Uterus (tissue), 4 donors: ENCODE measurements at regions of chr7 and their contacts with region 1.

Region 1: GRCh38 chr7:86708031-86708680 is 64.4 kb downstream of the GRM3 start:
- DNase-seq: no peak
- H3K4me3 ChIP-seq: no peak overlapping the region
- H3K27ac ChIP-seq: no peak overlapping the region
- H3K4me1 ChIP-seq: no peaks in the 10 kb centered on the region
- H3K27me3 ChIP-seq: no peaks in the 10 kb centered on the region
- CTCF ChIP-seq: no peak
- POLR2A ChIP-seq: no peak

Region 2: GRCh38 chr7:86785641-86786040 is 77.5 kb after region 1 on chr7:
- intact Hi-C with region 1: loop called (anchors 10 kb)
- DNase-seq: no peak
- H3K4me3 ChIP-seq: no peak overlapping the region
- H3K27ac ChIP-seq: no peak overlapping the region
- H3K4me1 ChIP-seq: no peaks in the 10 kb centered on the region
- H3K27me3 ChIP-seq: no peaks in the 10 kb centered on the region
- CTCF ChIP-seq: no peak
- POLR2A ChIP-seq: no peak

Region 3: GRCh38 chr7:86814661-86815379 is 106.7 kb after region 1 on chr7:
- intact Hi-C with region 1: no loop called
- DNase-seq: no peak
- H3K4me3 ChIP-seq: no peak overlapping the region
- H3K27ac ChIP-seq: no peak overlapping the region
- H3K4me1 ChIP-seq: no peaks in the 10 kb centered on the region
- H3K27me3 ChIP-seq: no peaks in the 10 kb centered on the region
- CTCF ChIP-seq: peak in 1 of 4 experiments; percentile 29
- POLR2A ChIP-seq: no peak